ENCODE measurements at regions of chr6 and their contacts with region 1.

Region 1: DNA sequence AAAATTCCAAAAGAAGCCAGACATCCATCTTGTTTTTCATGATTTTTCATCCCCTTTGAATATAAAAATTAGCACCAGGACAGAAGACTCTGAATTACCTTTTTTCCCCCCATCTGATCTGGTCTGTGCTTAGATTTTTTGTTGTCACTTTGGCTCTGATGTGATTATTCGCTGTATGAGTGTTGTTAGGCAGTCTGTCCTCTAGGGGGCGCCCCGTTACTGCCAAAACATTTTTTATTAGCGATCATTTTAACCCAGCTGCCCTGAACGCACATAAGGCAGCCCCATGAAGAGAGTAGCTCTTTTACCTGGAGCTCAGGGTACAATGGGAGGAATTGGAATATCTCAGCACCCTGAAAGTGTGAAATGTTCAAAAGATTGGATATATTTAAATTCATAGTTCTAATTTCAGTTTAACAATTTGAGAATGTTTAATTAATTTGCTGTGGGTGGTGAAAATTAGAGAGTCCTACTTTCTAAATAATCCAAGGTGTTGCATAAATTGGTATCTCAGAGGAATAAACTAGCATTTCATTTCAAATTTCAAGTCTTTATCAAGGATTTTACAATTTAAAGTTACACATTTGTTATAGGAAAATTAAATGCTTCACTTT is 60.8 kb downstream of the PRPH2 start:
- DNase-seq: peak; percentile 68 to 81
- ATAC-seq: peak in 7 of 8 donors; percentile 61 to 90 (median 82)
- H3K4me3 ChIP-seq: no peak overlapping the region
- H3K27ac ChIP-seq: no peak overlapping the region
- H3K4me1 ChIP-seq: no peaks in the 10 kb centered on the region
- H3K27me3 ChIP-seq: no peaks in the 10 kb centered on the region
- CTCF ChIP-seq: peak; percentile 81 to 95 (median 91)

Region 2: GRCh38 chr6:42890311-42891198 is 228.9 kb after region 1 on chr6:
- intact Hi-C with region 1: loop called in 3 of 10 experiments (anchors 5 kb)
- DNase-seq: peak; percentile 92 to 96
- ATAC-seq: peak; percentile 98 to 99 (median 99)
- H3K4me3 ChIP-seq: peak overlapping the region; percentile 78 to 94 (median 91)
- H3K27ac ChIP-seq: peak overlapping the region; percentile 87 to 96 (median 92)
- H3K4me1 ChIP-seq: peaks cover 7 to 29% (median 15%) of the 10 kb centered on the region in 9 donors
- H3K27me3 ChIP-seq: no peaks in the 10 kb centered on the region
- CTCF ChIP-seq: no peak

Region 3: GRCh38 chr6:44415873-44416502 is 1754.3 kb after region 1 on chr6:
- intact Hi-C with region 1: no loop called
- DNase-seq: no peak
- ATAC-seq: peak in 6 of 8 donors; percentile 35 to 86 (median 51)
- H3K4me3 ChIP-seq: no peak overlapping the region
- H3K27ac ChIP-seq: peak overlapping the region in 2 of 10 donors; percentile 16 to 26
- H3K4me1 ChIP-seq: peaks cover 0 to 21% (median 13%) of the 10 kb centered on the region in 9 donors
- H3K27me3 ChIP-seq: no peaks in the 10 kb centered on the region
- CTCF ChIP-seq: no peak